Common myeloid progenitor, CD34-positive (primary cell): ENCODE measurements at regions of chr7 and their contacts with region 1.

Region 1: GRCh38 chr7:5429857-5430611 is 6.4 kb upstream of the TNRC18 start:
- DNase-seq: peak in 2 of 3 donors; percentile 73 to 80
- H3K4me3 ChIP-seq: peak overlapping the region; percentile 69 to 100 (median 93)
- H3K27ac ChIP-seq: peak overlapping the region; percentile 77 to 97
- H3K4me1 ChIP-seq: peaks cover 0 to 45% (median 39%) of the 10 kb centered on the region in 4 experiments
- H3K27me3 ChIP-seq: no peaks in the 10 kb centered on the region

Region 2: DNA sequence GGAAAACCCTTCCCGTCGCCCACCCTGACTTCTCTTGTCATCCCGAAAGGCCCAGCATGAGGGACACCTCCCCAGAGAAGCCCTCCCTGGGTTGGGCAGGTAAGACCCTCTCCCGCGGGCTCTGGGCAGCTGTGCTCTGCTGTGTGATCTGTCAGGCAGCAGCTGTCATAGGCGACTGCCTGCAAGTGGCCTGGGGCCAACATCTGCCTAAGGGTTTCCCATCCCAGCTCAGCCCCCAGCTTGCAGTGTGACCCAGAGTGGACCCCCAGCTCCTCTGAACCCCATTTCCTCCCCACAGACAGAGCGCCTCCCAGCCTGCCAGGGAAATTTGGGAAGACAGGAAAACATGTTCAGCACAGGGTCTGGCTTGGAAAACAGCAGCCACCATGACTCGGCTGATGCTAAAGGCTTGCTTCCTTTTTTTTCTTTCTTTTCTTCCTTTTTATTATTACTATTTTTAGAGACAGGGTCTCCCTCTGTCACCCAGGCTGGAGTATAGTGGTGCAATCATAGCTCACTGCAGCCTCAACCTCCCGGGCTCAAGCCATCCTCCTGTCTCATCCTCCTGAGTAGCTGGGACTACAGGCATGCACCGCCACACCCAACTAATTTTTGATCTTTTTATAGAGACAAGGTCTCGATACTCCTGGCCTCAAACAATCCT is 11.9 kb after region 1 on chr7:
- CTCF ChIA-PET with region 1: interaction called, 24 read pairs
- POLR2A ChIA-PET with region 1: interaction called, 5 read pairs
- DNase-seq: peak in 2 of 3 donors; percentile 44 to 52
- H3K4me3 ChIP-seq: peak overlapping the region in 3 of 7 experiments; percentile 11 to 26 (median 23)
- H3K27ac ChIP-seq: peak overlapping the region in 1 of 2 experiments; percentile 34
- H3K4me1 ChIP-seq: peaks cover 0 to 55% (median 47%) of the 10 kb centered on the region in 4 experiments
- H3K27me3 ChIP-seq: no peaks in the 10 kb centered on the region